ENCODE measurements at regions of chr11 and their contacts with region 1.

Region 1: GRCh38 chr11:69686452-69686851 is 11.3 kb upstream of the LTO1 start:
- DNase-seq: no peak
- H3K4me3 ChIP-seq: no peak overlapping the region
- H3K4me3 Mint-ChIP-seq: peak overlapping the region in 1 of 8 donors; percentile 39
- H3K27ac ChIP-seq: no peak overlapping the region
- H3K27ac Mint-ChIP-seq: no peak overlapping the region
- H3K4me1 ChIP-seq: peaks cover 7% of the 10 kb centered on the region
- H3K4me1 Mint-ChIP-seq: peaks cover 2 to 7% (median 4%) of the 10 kb centered on the region in 4 donors
- H3K27me3 ChIP-seq: no peaks in the 10 kb centered on the region
- H3K27me3 Mint-ChIP-seq: peaks cover 12 to 16% of the 10 kb centered on the region in 2 donors

Region 2: DNA sequence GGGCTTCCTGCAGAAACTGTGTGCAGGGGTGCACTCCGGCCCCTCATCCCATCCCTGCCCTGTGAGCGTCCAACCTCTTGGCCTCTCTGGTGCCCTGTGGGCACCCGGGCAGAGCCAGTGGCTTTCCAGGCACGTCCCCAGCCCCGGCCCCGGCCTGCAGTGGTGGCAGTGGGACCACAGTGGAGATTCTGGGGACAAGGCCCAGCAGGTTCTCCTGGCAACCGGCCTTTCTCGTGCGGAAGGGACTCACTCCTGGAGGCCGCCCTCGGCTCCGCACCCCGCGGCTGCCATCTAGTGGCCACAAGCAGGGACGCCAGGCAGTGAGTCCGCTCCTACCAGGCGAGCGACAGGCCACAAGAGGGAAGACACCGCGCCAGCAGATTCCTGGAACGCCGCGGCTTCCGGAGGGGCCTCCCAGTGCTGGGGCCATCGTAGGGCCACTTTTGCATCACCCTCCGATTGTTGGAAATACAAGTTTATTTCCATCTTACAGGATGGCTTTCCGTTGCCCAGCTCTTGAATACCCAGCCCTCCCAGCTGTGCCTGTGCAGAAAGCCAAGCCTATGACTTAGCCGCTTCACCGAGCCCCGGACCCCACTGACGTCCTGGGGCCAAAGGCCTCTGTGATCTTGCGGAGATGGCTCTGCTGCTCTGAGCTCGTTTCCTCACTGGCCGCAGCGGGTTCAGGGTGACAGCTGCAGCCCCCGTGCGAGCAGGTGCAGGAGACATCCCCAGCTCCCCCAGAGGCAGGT is 1069.1 kb after region 1 on chr11:
- CTCF ChIA-PET with region 1: no interaction called
- POLR2A ChIA-PET with region 1: no interaction called
- intact Hi-C with region 1: loop called (anchors 5 kb)
- DNase-seq: peak in 4 of 5 donors; percentile 16 to 29 (median 20)
- H3K4me3 ChIP-seq: no peak overlapping the region
- H3K4me3 Mint-ChIP-seq: peak overlapping the region in 2 of 8 donors; percentile 17 to 46
- H3K27ac ChIP-seq: no peak overlapping the region
- H3K27ac Mint-ChIP-seq: no peak overlapping the region
- H3K4me1 ChIP-seq: no peaks in the 10 kb centered on the region
- H3K4me1 Mint-ChIP-seq: no peaks in the 10 kb centered on the region
- H3K27me3 ChIP-seq: no peaks in the 10 kb centered on the region
- H3K27me3 Mint-ChIP-seq: peaks cover 9 to 13% of the 10 kb centered on the region in 2 donors

Region 3: GRCh38 chr11:70935006-70935768 is 1248.7 kb after region 1 on chr11:
- CTCF ChIA-PET with region 1: no interaction called
- POLR2A ChIA-PET with region 1: no interaction called
- intact Hi-C with region 1: no loop called
- DNase-seq: no peak
- H3K4me3 ChIP-seq: no peak overlapping the region
- H3K4me3 Mint-ChIP-seq: no peak overlapping the region
- H3K27ac ChIP-seq: no peak overlapping the region
- H3K27ac Mint-ChIP-seq: no peak overlapping the region
- H3K4me1 ChIP-seq: no peaks in the 10 kb centered on the region
- H3K4me1 Mint-ChIP-seq: no peaks in the 10 kb centered on the region
- H3K27me3 ChIP-seq: no peaks in the 10 kb centered on the region
- H3K27me3 Mint-ChIP-seq: peaks cover 0 to 4% of the 10 kb centered on the region in 2 donors

Measured in CD4-positive, alpha-beta memory T cell (primary cell).